Mucosa of descending colon (tissue), 3 donors: ENCODE measurements at regions of chr16 and their contacts with region 1.

Region 1: DNA sequence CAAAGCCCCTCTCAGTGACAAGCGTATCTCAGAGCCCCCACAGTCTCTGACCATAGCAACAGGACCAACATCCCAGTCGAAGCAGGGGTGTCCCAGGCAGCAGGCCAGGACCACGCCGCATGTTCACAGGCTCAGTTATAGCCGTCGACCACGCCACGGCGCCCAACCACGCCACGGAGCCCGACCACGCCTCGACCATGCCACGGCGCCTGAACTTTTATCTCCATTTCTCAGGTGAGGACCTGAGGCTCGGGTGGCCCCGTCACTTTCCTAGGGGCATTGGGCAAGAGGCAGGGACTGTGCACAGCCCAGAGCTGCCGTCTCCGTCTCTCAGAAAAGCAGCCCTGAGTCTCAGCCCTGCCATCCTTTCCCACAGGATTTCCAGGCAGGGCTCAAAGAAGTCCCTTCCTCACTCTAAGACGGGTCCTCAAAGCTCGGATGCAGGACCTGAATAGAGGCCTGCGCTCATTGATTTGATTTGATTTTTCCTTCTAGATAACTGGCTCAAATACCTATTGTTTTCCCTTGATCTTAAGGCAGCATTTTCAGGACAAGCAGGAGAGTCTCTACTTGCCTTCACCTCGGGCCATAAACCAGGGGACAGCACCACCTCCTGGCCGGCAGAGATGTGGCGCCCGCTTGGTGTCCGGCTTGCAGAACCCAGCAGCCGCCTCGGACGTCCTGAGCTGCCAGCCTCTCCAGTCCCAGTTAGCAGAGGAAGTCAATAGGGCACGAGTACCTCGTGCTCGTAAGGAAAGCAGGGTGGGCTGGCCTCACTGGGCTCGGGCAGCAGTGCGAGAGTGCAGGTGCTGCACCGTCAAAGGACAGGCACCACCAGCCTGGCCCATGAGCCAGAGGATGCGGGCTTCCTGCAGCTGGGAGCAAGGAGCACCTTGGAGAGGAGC is 38.7 kb downstream of the C16orf95 start:
- DNase-seq: peak; percentile 72 to 82 (median 81)
- ATAC-seq: peak; percentile 96
- H3K4me3 ChIP-seq: no peak overlapping the region
- H3K4me1 ChIP-seq: peaks cover 7% of the 10 kb centered on the region
- CTCF ChIP-seq: peak; percentile 69

Region 2: GRCh38 chr16:87203060-87203656 is 75.3 kb before region 1 on chr16:
- intact Hi-C with region 1: loop called in 1 of 2 experiments (anchors 5 kb)
- DNase-seq: peak in 2 of 3 donors; percentile 79 to 84
- ATAC-seq: peak; percentile 93
- H3K4me3 ChIP-seq: no peak overlapping the region
- H3K4me1 ChIP-seq: no peaks in the 10 kb centered on the region
- CTCF ChIP-seq: peak; percentile 72

Region 3: DNA sequence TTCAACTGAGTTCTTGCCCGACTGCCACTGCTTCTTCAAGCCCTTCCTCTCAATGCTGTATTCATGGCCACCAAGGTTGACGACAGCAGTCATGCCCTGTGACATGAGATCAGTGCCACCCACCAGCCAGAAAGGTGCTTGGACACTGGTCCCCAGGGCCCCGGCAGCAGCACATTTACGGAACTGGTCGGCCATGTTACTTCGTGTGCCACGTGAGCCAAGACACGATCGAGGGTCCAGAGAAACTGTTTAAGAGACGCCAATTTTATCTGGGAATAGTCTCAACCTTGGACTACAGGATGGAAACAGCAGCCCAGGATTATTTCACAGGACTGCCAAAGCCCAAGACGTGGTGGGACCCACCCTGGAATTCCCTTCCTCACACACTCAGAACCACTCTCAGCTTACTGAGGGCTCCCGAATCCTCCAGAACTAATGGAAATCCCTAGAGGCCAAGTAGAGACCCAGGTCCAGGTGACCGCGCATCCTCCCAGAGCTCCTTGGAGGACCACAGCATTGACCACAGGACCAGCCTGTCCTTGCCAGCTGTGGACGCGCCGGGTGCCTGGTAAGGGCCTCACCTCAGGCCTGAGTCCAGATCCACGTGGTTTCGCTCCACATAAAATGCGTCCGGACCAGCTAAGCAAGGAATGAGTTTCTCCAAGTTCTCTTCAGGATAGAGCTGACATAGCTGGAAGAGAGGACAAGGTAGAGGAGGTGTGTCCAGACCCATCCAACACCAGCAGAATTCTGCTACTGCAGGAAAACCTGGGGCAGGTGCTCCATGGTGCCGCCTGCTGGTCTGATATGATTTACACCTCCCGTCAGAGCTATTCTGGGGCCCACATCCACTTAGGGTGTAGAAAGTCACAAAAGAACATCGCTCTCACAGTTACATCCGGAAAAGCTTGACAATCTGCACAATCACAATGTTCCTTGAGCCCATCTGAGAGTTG is 141.9 kb after region 1 on chr16:
- intact Hi-C with region 1: no loop called
- DNase-seq: no peak
- ATAC-seq: peak; percentile 34
- H3K4me3 ChIP-seq: no peak overlapping the region
- H3K4me1 ChIP-seq: no peaks in the 10 kb centered on the region
- CTCF ChIP-seq: no peak